Activated B cell treated with CpG ODN at 0.5 μM for 24 hours (primary cell): ENCODE measurements at regions of chr10 and their contacts with region 1.

Region 1: DNA sequence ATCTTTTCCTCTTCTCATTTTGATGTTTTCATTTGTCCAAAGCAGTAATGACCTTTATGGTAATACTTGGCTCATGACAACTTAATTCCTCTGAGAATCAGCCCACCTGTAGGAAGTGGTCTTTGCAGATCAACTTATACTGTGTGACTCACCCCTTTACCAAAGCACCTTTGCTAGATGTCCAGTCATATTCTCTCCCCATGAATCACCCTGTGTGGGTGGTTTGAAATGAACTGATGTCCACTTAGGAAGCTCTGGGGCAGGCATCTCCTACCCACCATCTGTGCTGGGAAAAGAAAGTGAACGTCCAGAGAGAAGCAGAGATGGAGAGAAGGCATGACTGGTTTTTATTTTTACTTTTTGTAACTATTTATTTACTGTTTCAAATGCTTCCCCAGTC is 410.3 kb downstream of the KIF20B start:
- DNase-seq: no peak
- ATAC-seq: no peak
- H3K4me3 Mint-ChIP-seq: no peak overlapping the region
- H3K27ac Mint-ChIP-seq: no peak overlapping the region
- H3K4me1 Mint-ChIP-seq: no peaks in the 10 kb centered on the region
- H3K27me3 Mint-ChIP-seq: no peaks in the 10 kb centered on the region
- CTCF ChIP-seq: no peak

Region 2: DNA sequence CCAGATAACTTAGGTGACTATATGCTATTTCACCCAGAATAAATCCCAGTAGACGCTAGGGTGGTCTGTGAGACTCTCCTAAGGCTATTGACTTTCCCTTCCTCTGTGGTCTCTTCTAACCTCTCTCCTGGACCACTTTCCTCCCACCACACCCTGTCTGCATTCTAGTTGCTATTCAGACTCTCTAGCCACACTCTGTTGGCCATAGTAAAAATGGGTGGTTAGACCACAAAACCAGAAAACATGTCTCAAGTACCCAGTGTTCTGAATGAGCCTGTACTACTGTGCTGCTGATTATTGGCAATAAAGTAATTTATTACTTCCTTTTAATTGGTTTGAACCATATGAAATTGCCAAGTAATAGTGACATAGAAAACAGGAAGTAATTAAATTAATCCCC is 169.5 kb before region 1 on chr10:
- CTCF ChIA-PET with region 1: no interaction called
- POLR2A ChIA-PET with region 1: no interaction called
- intact Hi-C with region 1: no loop called
- DNase-seq: no peak
- ATAC-seq: no peak
- H3K4me3 Mint-ChIP-seq: no peak overlapping the region
- H3K27ac Mint-ChIP-seq: no peak overlapping the region
- H3K4me1 Mint-ChIP-seq: peaks cover 8% of the 10 kb centered on the region
- H3K27me3 Mint-ChIP-seq: peaks cover 36% of the 10 kb centered on the region
- CTCF ChIP-seq: no peak

Region 3: GRCh38 chr10:90149563-90149962 is 37.9 kb after region 1 on chr10:
- CTCF ChIA-PET with region 1: no interaction called
- POLR2A ChIA-PET with region 1: no interaction called
- intact Hi-C with region 1: no loop called
- DNase-seq: no peak
- ATAC-seq: no peak
- H3K4me3 Mint-ChIP-seq: no peak overlapping the region
- H3K27ac Mint-ChIP-seq: no peak overlapping the region
- H3K4me1 Mint-ChIP-seq: no peaks in the 10 kb centered on the region
- H3K27me3 Mint-ChIP-seq: no peaks in the 10 kb centered on the region
- CTCF ChIP-seq: no peak

Region 4: GRCh38 chr10:90227217-90227656 is 115.6 kb after region 1 on chr10:
- CTCF ChIA-PET with region 1: no interaction called
- POLR2A ChIA-PET with region 1: no interaction called
- intact Hi-C with region 1: no loop called
- DNase-seq: no peak
- ATAC-seq: no peak
- H3K4me3 Mint-ChIP-seq: no peak overlapping the region
- H3K27ac Mint-ChIP-seq: no peak overlapping the region
- H3K4me1 Mint-ChIP-seq: no peaks in the 10 kb centered on the region
- H3K27me3 Mint-ChIP-seq: peaks cover 3% of the 10 kb centered on the region
- CTCF ChIP-seq: no peak

Region 5: GRCh38 chr10:92074126-92074887 is 1962.6 kb after region 1 on chr10:
- CTCF ChIA-PET with region 1: no interaction called
- POLR2A ChIA-PET with region 1: no interaction called
- intact Hi-C with region 1: loop called (anchors 10 kb)
- DNase-seq: no peak
- ATAC-seq: no peak
- H3K4me3 Mint-ChIP-seq: no peak overlapping the region
- H3K27ac Mint-ChIP-seq: no peak overlapping the region
- H3K4me1 Mint-ChIP-seq: no peaks in the 10 kb centered on the region
- H3K27me3 Mint-ChIP-seq: no peaks in the 10 kb centered on the region
- CTCF ChIP-seq: no peak